Activated CD4-positive, alpha-beta memory T cell treated with anti-CD3 and anti-CD28 coated beads, Interleukin-2, amount 10 ng/mL, durations not matched to agents 7 days and 5 days (primary cell): ENCODE measurements at regions of chr9 and their contacts with region 1.

Region 1: GRCh38 chr9:19048966-19049916 is at the start of gene RRAGA:
- DNase-seq: peak; percentile 96
- H3K4me3 Mint-ChIP-seq: peak within 1 kb of the TSS; percentile 97
- H3K27ac Mint-ChIP-seq: peak within 1 kb of the TSS; percentile 97
- H3K4me1 Mint-ChIP-seq: peaks cover 35% of the 10 kb centered on the region
- H3K27me3 Mint-ChIP-seq: no peaks in the 10 kb centered on the region
- total RNA-seq, gene RRAGA: 50.2 to 51.1 TPM

Region 2: GRCh38 chr9:18928711-18929110 is 120.5 kb before region 1 on chr9:
- CTCF ChIA-PET with region 1: no interaction called
- POLR2A ChIA-PET with region 1: no interaction called
- DNase-seq: no peak
- H3K4me3 Mint-ChIP-seq: no peak overlapping the region
- H3K27ac Mint-ChIP-seq: no peak overlapping the region
- H3K4me1 Mint-ChIP-seq: no peaks in the 10 kb centered on the region
- H3K27me3 Mint-ChIP-seq: peaks cover 2% of the 10 kb centered on the region

Region 3: DNA sequence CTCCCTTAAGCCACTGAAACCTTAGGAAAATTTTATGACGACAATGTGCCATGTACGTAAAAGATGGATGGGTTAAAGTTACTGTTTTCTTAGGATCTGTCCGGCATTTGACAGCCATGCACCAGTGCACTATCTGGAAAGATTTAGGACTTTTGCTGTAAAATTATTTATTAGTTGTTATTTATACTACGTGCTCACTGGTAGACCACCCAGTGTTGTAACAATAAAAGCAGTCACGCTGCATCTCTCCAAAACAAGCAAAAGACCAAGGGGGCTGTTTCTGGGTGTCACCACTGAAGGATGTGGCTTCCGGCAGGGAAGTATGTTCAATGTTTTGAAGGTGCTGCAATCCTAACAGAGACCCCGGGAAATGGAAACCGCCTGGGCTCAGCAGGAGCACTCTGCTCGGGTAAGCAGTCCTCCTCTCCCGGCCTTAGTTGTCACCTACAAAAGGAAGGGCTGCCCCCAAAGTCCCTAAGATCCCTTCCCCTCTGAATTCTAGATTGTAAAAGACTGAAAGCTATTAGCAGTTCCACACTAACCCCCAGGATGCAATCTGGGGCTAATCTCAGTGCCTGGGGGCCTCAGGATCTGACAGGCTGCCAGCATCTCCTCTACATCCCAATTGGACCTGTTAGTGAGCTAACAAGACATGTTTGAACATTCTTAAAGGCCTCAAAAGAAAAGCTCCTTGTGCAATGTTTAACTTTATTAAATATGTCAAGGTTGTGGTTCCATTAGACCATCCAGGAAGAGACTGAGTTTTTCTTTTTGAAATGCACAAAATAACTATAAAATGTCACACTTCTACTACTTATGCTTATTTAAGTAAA is 54.8 kb before region 1 on chr9:
- CTCF ChIA-PET with region 1: no interaction called
- POLR2A ChIA-PET with region 1: no interaction called
- DNase-seq: no peak
- H3K4me3 Mint-ChIP-seq: no peak overlapping the region
- H3K27ac Mint-ChIP-seq: no peak overlapping the region
- H3K4me1 Mint-ChIP-seq: no peaks in the 10 kb centered on the region
- H3K27me3 Mint-ChIP-seq: no peaks in the 10 kb centered on the region

Region 4: DNA sequence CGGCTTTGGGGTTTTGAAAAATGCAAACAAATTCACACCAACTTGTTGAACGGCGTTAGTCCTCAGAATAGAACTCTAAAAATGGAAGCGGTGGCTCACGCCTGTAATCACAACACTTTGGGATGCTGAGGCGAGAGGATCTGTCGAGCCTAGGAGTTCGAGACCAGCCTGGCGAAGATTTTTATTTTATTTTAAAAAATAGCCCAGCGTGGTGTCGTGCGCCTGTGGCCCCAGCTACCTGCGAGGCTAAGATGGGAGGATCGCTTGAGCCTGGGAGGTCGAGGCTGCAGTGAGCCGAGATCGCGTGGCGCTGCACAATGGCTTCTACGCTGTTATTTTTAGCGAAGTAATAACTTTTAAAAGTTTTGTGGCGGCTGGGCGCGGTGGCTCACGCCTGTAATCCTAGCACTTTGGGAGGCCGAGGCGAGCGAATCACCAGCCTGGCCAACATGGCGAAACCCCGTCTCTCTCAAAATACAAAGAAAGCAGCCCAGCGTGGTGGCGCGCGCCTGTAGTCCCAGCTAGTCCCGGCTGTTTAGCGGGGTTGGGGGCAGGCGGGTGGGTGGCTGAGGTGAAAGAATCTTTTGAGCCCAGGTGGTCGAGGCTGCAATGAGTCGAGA is 78.8 kb after region 1 on chr9:
- CTCF ChIA-PET with region 1: interaction called, 4 read pairs
- POLR2A ChIA-PET with region 1: interaction called, 21 read pairs
- DNase-seq: peak; percentile 49
- H3K4me3 Mint-ChIP-seq: peak overlapping the region; percentile 97
- H3K27ac Mint-ChIP-seq: peak overlapping the region; percentile 98
- H3K4me1 Mint-ChIP-seq: peaks cover 61% of the 10 kb centered on the region
- H3K27me3 Mint-ChIP-seq: no peaks in the 10 kb centered on the region

Region 5: DNA sequence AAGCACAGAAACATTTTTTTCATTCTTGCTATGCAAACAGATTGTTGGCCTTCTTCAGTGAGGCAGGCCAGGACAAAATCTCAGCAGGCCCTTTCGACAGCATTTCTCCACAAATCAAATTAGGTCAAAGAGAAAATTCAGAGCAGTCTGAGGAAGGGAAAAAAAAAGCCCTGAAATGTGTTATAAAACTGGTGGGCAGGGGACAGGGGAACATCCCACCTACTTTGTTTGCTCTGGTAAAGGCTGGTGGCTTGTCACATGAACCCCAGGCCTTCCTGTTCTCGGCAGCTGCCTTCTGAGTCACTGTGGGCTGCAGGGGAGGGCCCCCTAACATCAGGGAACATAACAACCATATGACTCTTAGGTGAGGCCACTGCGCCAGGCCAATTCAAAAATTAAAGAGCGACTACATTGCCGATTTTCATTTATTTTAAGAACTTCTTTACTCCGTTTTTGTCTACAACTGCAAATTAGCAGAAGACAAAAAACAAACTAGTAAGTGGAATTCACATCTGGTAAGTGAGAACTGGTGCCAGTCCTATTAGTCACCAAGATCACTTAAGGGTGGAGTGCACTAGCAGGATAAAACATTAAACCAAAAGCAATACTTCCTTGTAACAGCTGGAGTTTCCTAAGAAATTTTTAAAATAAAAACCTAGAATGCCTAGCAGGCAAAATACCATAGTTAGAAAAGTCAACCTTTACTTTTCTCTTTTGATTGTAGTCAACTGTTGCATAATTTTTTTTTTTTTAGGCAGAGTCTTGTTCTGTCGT is 135.1 kb after region 1 on chr9:
- CTCF ChIA-PET with region 1: interaction called, 12 read pairs
- POLR2A ChIA-PET with region 1: interaction called, 12 read pairs
- DNase-seq: peak; percentile 88
- H3K4me3 Mint-ChIP-seq: peak overlapping the region; percentile 55
- H3K27ac Mint-ChIP-seq: peak overlapping the region; percentile 99
- H3K4me1 Mint-ChIP-seq: peaks cover 41% of the 10 kb centered on the region
- H3K27me3 Mint-ChIP-seq: no peaks in the 10 kb centered on the region

Region 6: DNA sequence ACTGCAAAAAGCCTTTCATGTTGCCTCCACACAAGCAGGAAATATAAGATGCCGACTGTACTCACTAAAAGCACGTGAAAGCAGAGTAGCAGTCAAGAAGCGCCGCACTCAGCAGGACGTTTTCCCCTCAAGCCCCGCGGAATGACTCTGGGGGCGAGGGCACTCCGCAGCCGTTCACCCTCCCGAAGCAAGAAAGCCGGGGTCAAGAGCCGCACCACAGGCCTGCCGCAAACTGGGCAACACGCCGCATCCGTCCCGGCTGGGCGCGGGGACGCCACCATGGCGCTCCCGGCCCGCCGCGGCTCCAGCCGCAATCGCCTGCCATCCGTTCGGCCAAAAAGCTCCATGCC is 330.4 kb after region 1 on chr9:
- CTCF ChIA-PET with region 1: interaction called, 7 read pairs
- POLR2A ChIA-PET with region 1: interaction called, 27 read pairs
- DNase-seq: no peak
- H3K4me3 Mint-ChIP-seq: peak overlapping the region; percentile 91
- H3K27ac Mint-ChIP-seq: peak overlapping the region; percentile 89
- H3K4me1 Mint-ChIP-seq: peaks cover 50% of the 10 kb centered on the region
- H3K27me3 Mint-ChIP-seq: no peaks in the 10 kb centered on the region

Region 7: GRCh38 chr9:19464764-19465585 is 415.7 kb after region 1 on chr9:
- CTCF ChIA-PET with region 1: interaction called, 13 read pairs
- POLR2A ChIA-PET with region 1: interaction called, 5 read pairs
- DNase-seq: peak; percentile 66
- H3K4me3 Mint-ChIP-seq: peak overlapping the region; percentile 72
- H3K27ac Mint-ChIP-seq: no peak overlapping the region
- H3K4me1 Mint-ChIP-seq: peaks cover 21% of the 10 kb centered on the region
- H3K27me3 Mint-ChIP-seq: no peaks in the 10 kb centered on the region